ENCODE measurements at regions of chr15 and their contacts with region 1.

Region 1: GRCh38 chr15:39479911-39480310 is 101.0 kb upstream of the THBS1 start:
- DNase-seq: no peak
- ATAC-seq: no peak
- H3K4me3 ChIP-seq: no peak overlapping the region
- H3K27ac ChIP-seq: no peak overlapping the region
- H3K4me1 ChIP-seq: peaks cover 0 to 6% (median 0%) of the 10 kb centered on the region in 12 donors
- H3K27me3 ChIP-seq: no peaks in the 10 kb centered on the region
- CTCF ChIP-seq: no peak
- POLR2A ChIP-seq: no peak

Region 2: GRCh38 chr15:39273717-39274411 is 206.0 kb before region 1 on chr15:
- intact Hi-C with region 1: no loop called
- DNase-seq: no peak
- ATAC-seq: peak in 2 of 4 donors; percentile 31 to 41
- H3K4me3 ChIP-seq: no peak overlapping the region
- H3K27ac ChIP-seq: no peak overlapping the region
- H3K4me1 ChIP-seq: peaks cover 0 to 17% (median 0%) of the 10 kb centered on the region in 12 donors
- H3K27me3 ChIP-seq: no peaks in the 10 kb centered on the region
- CTCF ChIP-seq: no peak
- POLR2A ChIP-seq: no peak

Region 3: GRCh38 chr15:39381517-39381916 is 98.4 kb before region 1 on chr15:
- intact Hi-C with region 1: no loop called
- DNase-seq: no peak
- ATAC-seq: no peak
- H3K4me3 ChIP-seq: no peak overlapping the region
- H3K27ac ChIP-seq: peak overlapping the region in 1 of 12 donors; percentile 63
- H3K4me1 ChIP-seq: peaks cover 0 to 20% (median 0%) of the 10 kb centered on the region in 12 donors
- H3K27me3 ChIP-seq: no peaks in the 10 kb centered on the region
- CTCF ChIP-seq: no peak
- POLR2A ChIP-seq: no peak

Region 4: DNA sequence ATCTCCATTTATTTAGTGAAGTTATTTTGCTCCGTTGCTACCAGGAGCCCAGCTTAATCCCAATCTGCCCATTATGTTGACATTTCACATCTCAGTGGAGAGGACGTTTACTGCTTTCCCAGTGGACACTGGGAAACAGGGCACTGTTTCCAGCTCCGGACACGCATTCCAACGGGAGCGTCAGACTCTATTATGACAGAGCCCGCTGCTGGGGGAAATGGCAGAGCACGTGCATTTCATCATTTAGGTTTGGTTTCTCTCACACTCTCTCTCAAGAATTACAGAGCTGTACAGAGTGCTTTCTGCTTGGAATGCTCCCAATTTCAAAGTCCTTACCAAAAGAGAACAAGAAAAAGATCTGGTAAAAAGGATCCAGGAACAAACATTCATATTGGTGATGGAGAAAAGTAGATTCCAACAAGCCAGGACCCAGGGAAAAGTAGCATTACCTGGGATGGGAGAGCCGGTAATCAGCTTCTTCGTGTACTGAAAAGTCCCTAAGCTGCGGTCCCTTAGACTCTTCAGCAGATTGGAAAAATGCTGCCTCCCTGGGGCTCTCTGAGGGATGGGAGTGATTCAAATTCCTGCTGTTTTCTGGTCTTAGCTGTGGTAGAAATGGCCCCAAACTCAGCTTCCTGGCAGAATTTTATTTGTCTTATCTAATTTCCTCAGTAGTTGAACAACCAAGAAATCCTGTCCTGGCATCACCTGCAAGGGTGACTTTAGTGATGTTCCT is 35.0 kb before region 1 on chr15:
- intact Hi-C with region 1: loop called in 1 of 10 experiments (anchors 5 kb)
- DNase-seq: peak in 1 of 5 donors; percentile 35
- ATAC-seq: peak in 2 of 4 donors; percentile 26 to 50
- H3K4me3 ChIP-seq: no peak overlapping the region
- H3K27ac ChIP-seq: peak overlapping the region in 1 of 12 donors; percentile 8
- H3K4me1 ChIP-seq: peaks cover 0 to 2% (median 0%) of the 10 kb centered on the region in 12 donors
- H3K27me3 ChIP-seq: no peaks in the 10 kb centered on the region
- CTCF ChIP-seq: peak in 1 of 12 donors; percentile 6
- POLR2A ChIP-seq: no peak

Region 5: DNA sequence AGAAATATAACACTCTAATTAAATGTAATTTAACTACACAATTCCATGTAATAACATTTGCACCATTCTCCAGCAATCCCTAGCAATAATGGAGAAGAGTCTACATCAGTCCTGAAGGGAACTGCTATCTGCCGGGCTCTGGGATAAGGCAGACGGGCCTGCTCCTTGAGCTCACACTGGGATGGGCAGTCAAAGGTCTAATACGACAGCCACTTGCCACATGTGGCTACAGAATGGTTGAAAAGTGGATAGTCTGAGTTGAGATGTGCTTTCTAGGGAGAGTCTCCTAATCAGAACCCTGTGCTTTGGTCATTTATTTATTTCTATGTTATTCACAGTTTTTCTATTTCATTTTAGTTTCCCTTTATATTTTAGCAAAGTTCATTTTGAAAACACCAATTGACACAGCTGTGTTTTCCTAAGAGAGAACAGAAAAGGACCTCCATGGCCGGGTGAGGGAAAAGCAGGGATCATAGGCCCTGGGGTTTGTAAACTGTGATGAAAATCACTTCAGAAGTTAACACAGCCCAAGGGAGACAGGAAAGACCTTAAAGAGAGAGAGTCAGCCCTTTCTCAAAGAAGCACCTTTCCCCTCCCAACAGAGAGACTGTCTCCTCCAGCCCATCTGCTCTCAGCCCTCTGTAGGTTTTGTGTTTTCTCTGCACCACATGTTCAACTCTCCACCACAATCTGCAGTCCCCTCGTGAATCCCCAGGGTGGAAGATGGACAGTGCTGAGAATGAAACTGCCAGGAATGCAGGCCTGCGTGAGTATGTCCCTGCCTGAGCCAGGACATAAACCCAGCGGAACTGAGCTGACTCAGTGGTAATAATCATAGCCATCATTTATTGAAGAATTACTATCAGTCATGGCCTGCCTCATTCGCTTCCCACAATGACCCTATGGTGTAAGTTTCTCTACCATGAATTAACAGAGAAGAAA is 291.1 kb after region 1 on chr15:
- intact Hi-C with region 1: no loop called
- DNase-seq: peak in 1 of 5 donors; percentile 23
- ATAC-seq: peak; percentile 50 to 76 (median 62)
- H3K4me3 ChIP-seq: peak overlapping the region in 2 of 12 donors; percentile 10 to 12
- H3K27ac ChIP-seq: peak overlapping the region; percentile 7 to 68 (median 43)
- H3K4me1 ChIP-seq: peaks cover 0 to 10% (median 0%) of the 10 kb centered on the region in 12 donors
- H3K27me3 ChIP-seq: no peaks in the 10 kb centered on the region
- CTCF ChIP-seq: no peak
- POLR2A ChIP-seq: no peak

Measured in heart left ventricle (tissue), 16 donors.